Gastrocnemius medialis (tissue), 4 donors: ENCODE measurements at regions of chr2 and their contacts with region 1.

Region 1: DNA sequence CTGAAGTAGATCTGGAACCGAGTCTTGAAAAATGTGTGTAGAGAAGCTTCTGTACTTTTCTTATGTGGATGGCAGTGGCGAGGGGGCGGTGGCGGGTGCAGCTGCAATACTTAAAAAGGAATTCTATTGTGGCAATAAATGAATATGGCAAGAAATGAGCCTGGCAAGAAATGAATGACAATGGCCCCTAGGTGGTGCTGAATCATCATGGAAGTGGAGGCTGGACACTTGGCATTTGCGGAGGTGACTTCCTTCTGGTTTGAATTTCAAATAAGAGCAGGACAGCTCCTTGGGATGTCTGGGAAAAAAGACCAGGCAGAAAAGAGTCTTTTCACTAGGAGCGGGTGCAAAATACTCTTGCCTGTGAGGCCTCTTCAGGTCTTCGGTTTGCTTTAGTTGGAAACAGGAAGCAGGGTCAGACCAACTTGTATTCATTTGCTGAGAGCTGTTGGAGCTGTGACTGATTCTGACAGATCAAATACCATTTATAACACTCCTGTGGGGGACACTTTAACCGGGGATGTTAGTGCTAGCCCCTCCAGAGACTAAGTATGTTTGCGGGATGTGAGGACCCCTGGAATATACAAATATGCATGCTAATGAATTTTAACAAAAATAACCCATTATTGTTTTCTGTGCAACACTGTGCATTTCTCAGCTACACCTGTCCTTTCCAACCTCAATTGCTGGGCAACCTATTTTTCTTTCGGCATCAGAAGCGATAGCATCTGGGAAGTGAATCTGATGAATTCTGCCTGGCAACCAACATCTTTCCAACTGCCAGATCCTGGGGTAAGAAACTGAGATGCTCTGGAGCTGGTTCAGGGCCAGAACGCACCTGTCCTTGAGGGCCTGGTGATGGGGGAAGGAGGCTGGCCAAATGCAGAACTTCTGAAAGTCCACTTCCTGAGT is 35.4 kb downstream of the FASTKD2 start:
- DNase-seq: peak; percentile 13 to 48
- ATAC-seq: peak; percentile 52 to 77
- H3K4me3 ChIP-seq: no peak overlapping the region
- H3K27ac ChIP-seq: no peak overlapping the region
- H3K4me1 ChIP-seq: peaks cover 0 to 10% of the 10 kb centered on the region in 2 donors
- H3K27me3 ChIP-seq: no peaks in the 10 kb centered on the region
- CTCF ChIP-seq: peak; percentile 51 to 64 (median 53)
- POLR2A ChIP-seq: no peak

Region 2: DNA sequence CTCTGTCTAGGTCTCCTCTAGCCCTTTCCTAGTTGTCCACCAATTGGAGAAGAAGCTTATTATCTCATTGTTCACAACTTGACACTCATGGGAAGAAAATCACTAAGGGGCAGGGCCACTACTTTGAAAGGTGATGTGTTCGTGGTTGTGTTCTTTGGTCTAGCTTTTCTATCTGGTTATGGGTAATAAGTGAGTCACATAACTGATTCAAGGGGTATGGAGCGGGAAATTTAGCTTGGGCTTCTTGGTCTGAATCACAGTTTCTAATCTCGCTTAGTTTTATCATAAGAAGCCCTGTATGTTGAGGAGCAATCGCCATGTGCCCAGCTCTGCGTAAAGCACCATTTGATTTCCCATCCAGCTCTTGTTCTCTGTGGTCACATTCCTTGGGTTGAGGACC is 63.8 kb before region 1 on chr2:
- in situ Hi-C with region 1: no loop called
- intact Hi-C with region 1: no loop called
- DNase-seq: no peak
- ATAC-seq: no peak
- H3K4me3 ChIP-seq: no peak overlapping the region
- H3K27ac ChIP-seq: no peak overlapping the region
- H3K4me1 ChIP-seq: no peaks in the 10 kb centered on the region
- H3K27me3 ChIP-seq: no peaks in the 10 kb centered on the region
- CTCF ChIP-seq: no peak
- POLR2A ChIP-seq: no peak

Region 3: GRCh38 chr2:206981739-206982340 is 181.1 kb after region 1 on chr2:
- in situ Hi-C with region 1: no loop called
- intact Hi-C with region 1: loop called (anchors 10 kb)
- DNase-seq: peak; percentile 29 to 30
- ATAC-seq: peak in 1 of 2 donors; percentile 74
- H3K4me3 ChIP-seq: no peak overlapping the region
- H3K27ac ChIP-seq: peak overlapping the region in 1 of 4 donors; percentile 10
- H3K4me1 ChIP-seq: peaks cover 0 to 8% of the 10 kb centered on the region in 2 donors
- H3K27me3 ChIP-seq: no peaks in the 10 kb centered on the region
- CTCF ChIP-seq: peak; percentile 54 to 82 (median 59)
- POLR2A ChIP-seq: no peak